ENCODE measurements at regions of chr2 and their contacts with region 1.

Region 1: GRCh38 chr2:18378020-18378653 is 182.3 kb downstream of the RDH14 start:
- DNase-seq: peak; percentile 62
- H3K4me3 ChIP-seq: no peak overlapping the region; a peak in 1 of 4 replicates
- H3K27ac ChIP-seq: no peak overlapping the region
- H3K4me1 ChIP-seq: no peaks in the 10 kb centered on the region
- H3K27me3 ChIP-seq: peaks cover 12% of the 10 kb centered on the region; the same call in 1 of the 2 replicates
- CTCF ChIP-seq: peak; percentile 98
- EP300 ChIP-seq: no peak
- RAD21 ChIP-seq: peak; percentile 86

Region 2: DNA sequence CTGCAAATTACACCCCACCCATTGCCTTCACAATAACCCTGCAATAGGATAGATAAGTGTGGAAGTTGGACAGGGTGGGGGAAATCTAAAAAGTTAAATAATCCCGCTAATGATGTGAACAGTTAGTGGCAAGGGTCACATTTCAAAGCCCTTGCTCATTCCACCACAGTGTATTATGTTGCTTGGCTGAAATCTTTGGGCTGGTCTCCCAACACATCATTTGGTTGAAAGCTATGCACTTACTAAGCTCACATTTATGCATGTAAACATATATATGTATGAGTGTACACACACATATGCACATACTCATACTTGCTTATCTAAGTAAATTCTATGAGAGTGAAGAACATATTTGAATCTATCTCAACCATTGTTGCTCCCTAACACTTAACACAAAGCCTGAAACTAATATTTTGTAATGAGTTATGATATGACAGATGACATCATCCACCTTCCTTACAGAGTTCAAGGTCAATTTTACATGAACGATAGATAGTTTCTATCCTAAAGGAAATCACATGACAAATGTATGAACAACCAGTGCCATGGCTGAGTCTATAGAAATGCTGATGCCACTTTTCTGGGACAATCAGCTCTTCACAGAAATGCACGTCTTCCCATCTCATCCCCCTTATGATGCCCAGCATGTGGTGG is 15.3 kb before region 1 on chr2:
- CTCF ChIA-PET with region 1: interaction called, 13 read pairs
- POLR2A ChIA-PET with region 1: no interaction called
- DNase-seq: no peak
- H3K4me3 ChIP-seq: no peak overlapping the region
- H3K27ac ChIP-seq: no peak overlapping the region
- H3K4me1 ChIP-seq: no peaks in the 10 kb centered on the region
- H3K27me3 ChIP-seq: peaks cover 5% of the 10 kb centered on the region; the same call in 1 of the 2 replicates
- CTCF ChIP-seq: no peak
- EP300 ChIP-seq: no peak
- RAD21 ChIP-seq: no peak

Region 3: DNA sequence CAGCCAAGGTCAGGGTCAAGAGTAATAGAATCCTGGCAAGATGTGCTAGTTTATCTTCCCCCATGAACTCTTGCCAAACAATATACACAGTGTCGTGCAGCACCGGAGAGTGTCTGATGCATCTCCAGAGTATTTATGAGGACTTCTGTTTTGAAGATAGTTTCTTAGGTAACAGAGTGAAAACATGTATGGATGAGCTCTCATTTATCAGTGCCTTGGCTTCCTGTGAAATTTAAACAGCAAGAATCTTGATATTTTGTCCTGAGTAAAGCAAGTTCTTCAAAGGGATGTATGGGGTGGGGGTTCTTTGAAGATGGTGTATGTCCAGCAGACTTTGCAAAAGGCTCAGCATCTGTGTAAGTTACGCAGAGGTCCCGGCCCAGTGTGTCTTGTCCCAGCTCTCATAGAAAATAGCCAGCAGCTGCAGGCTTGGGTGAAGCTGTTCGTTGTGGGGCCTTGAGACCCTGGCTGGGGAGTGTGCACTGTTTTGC is 572.3 kb after region 1 on chr2:
- CTCF ChIA-PET with region 1: no interaction called
- POLR2A ChIA-PET with region 1: no interaction called
- DNase-seq: peak; percentile 15
- H3K4me3 ChIP-seq: no peak overlapping the region
- H3K27ac ChIP-seq: peak overlapping the region; percentile 36 to 81; a peak in 3 of 4 replicates
- H3K4me1 ChIP-seq: peaks cover 0 to 5% of the 10 kb centered on the region in 2 experiments; a peak in 3 of 4 replicates
- H3K27me3 ChIP-seq: no peaks in the 10 kb centered on the region
- CTCF ChIP-seq: no peak
- EP300 ChIP-seq: peak in 1 of 2 experiments; percentile 76; a peak in 2 of 4 replicates
- RAD21 ChIP-seq: no peak